ENCODE measurements at regions of chr1 and their contacts with region 1.

Region 1: DNA sequence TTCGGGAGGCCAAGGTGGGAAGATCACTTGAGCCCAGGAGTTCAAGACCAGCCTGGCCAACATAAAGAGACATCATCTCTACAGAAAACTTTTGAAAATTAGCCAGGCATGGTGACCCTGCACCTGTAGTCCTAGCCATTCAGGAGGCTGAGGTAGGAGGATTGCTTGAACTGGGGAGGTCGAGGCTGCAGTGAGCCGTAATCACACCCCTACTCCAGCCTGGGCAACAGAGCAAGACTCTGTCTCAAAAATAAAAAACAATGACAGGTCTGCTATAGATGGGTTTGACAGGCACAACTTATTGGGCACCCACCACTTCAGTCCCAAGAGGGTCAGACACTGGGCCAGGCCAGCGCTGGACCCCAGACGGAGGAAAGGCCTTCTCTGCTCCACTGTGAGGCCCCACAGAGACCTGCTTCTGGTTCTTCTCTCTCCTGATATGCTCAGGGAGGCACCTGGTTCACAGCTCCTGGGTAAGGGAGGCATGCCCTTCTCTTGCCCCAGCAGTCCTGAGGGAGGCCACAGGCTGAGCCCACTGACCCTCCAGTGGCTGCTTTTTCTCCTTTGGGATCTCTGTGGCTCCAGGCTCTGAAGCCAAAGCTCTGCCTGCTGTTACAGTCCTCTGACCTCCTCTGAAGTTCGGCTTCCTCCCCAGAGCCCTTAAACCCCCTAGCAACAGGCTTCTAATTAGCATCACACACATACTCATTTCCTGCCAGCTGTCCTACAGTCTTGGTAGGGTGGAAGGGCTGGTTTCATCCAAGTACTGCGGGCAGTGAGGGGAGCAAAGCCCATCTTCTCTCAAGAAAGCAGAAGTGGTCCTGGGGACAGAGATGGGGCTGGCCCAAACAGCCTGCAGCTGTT is 14.4 kb downstream of the S100A16 start:
- DNase-seq: no peak
- ATAC-seq: peak; percentile 26
- H3K4me3 ChIP-seq: no peak overlapping the region
- H3K27ac ChIP-seq: no peak overlapping the region
- H3K4me1 ChIP-seq: no peaks in the 10 kb centered on the region
- H3K27me3 ChIP-seq: no peaks in the 10 kb centered on the region
- CTCF ChIP-seq: no peak

Region 2: GRCh38 chr1:153553830-153554541 is 44.6 kb before region 1 on chr1:
- CTCF ChIA-PET with region 1: no interaction called
- POLR2A ChIA-PET with region 1: no interaction called
- intact Hi-C with region 1: no loop called
- DNase-seq: no peak
- ATAC-seq: no peak
- H3K4me3 ChIP-seq: no peak overlapping the region
- H3K27ac ChIP-seq: no peak overlapping the region
- H3K4me1 ChIP-seq: peaks cover 12% of the 10 kb centered on the region
- H3K27me3 ChIP-seq: no peaks in the 10 kb centered on the region
- CTCF ChIP-seq: no peak

Region 3: GRCh38 chr1:153796791-153797659 is 198.5 kb after region 1 on chr1:
- CTCF ChIA-PET with region 1: interaction called, 12 read pairs
- POLR2A ChIA-PET with region 1: no interaction called
- intact Hi-C with region 1: no loop called
- DNase-seq: peak; percentile 92
- ATAC-seq: peak; percentile 84
- H3K4me3 ChIP-seq: no peak overlapping the region
- H3K27ac ChIP-seq: no peak overlapping the region
- H3K4me1 ChIP-seq: no peaks in the 10 kb centered on the region
- H3K27me3 ChIP-seq: no peaks in the 10 kb centered on the region
- CTCF ChIP-seq: peak; percentile 88

Measured in PC-3 (cell line).